Activated CD4-positive, alpha-beta T cell treated with anti-CD3 and anti-CD28 coated beads, Interleukin-2, amount 10 ng/mL, durations not matched to agents 24 days and 14 days (primary cell): ENCODE measurements at regions of chr17 and their contacts with region 1.

Region 1: DNA sequence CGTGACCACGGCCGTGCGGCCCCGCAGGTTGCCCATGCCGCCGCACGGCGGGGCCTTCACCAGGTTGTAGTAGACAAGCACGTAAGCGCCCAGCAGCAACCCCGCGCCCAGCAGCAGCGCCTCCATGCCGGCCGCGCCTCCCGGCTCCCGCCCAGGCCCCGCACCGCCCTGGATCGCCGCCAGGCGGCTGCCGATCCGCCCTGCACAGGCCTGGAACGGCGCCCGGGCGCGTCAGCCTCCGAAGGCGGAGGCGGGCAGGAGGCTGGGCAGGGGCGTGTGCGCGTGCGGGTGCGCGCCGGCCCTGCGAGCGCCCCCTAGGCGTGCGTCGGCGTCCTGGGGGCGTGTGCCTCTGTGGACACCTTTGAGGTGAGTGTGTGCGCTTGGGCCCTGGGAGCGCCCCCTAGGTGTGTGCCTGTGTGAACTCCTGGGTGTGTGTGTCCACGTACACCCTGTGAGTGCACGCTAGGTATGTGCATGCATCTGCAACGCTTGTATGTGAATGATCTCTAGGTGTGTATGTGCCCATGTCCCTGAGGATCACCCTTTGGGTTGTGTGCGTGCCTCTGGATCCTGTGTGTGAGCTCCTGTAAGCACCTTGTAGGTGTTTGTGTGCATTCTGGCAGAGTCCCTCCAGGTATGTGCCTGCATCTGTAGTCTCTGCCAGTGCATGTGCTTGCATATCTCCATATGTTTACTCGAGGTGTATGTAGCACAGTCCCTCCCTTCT is at the start of gene DHRS13:
- DNase-seq: peak; percentile 99
- H3K4me3 Mint-ChIP-seq: peak within 1 kb of the TSS; percentile 90
- H3K27ac Mint-ChIP-seq: peak within 1 kb of the TSS; percentile 86
- H3K4me1 Mint-ChIP-seq: peaks cover 39% of the 10 kb centered on the region
- H3K27me3 Mint-ChIP-seq: no peaks in the 10 kb centered on the region
- total RNA-seq, gene DHRS13: 32.4 and 34.3 TPM in 2 replicates

Region 2: DNA sequence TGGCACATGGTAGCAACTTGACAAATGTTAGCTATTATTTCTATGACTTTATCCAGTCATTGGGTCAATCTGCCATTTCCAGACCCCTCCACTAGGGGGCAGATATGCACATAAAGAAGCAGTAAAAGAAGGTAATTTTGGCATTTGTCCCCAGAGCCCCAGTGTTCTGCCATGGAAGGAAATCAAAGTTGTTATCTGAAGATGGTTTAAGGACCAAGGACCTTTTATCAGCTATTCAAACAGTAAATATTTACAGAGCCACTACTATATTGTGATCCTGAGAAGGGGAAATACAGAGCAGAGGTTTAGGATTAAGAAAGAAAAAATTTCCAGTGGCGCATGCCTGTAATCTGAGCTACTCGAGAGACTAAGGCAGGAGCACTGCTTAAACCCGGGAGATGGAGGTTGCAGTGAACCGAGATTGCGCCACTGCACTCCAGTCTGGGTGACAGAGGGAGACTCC is 139.1 kb before region 1 on chr17:
- intact Hi-C with region 1: loop called (anchors 2 kb)
- DNase-seq: peak; percentile 93
- H3K4me3 Mint-ChIP-seq: no peak overlapping the region
- H3K27ac Mint-ChIP-seq: no peak overlapping the region
- H3K4me1 Mint-ChIP-seq: peaks cover 15% of the 10 kb centered on the region
- H3K27me3 Mint-ChIP-seq: no peaks in the 10 kb centered on the region

Region 3: GRCh38 chr17:28854457-28855350 is 48.3 kb before region 1 on chr17 and contains the start of gene ERAL1:
- intact Hi-C with region 1: loop called (anchors 2 kb)
- DNase-seq: peak; percentile 96
- H3K4me3 Mint-ChIP-seq: peak within 1 kb of the TSS; percentile 82
- H3K27ac Mint-ChIP-seq: peak within 1 kb of the TSS; percentile 85
- H3K4me1 Mint-ChIP-seq: peaks cover 19% of the 10 kb centered on the region
- H3K27me3 Mint-ChIP-seq: no peaks in the 10 kb centered on the region
- total RNA-seq, gene ERAL1: 56.8 and 61.2 TPM in 2 replicates

Region 4: DNA sequence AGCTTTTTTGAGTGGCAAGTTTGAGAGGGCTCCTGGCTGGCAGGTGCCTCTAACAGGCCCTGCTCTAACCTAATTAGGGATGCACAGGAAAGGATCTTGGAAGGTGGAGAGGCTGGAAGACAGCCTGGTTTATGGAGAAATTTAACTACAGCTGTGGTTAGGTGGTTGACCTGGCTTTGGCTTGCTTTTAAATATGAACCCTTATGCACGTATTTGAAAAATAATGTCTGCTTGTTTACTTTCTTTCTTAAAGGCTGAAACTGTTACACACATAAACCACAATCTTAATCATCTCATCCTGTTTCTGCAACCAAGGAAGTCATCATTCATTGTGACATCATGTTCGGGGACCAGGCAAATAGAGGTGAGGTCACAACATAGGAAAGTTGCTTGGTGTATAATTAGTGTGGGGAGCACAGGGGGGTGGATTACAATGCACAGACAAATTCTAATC is 23.0 kb after region 1 on chr17:
- intact Hi-C with region 1: loop called (anchors 2 kb)
- DNase-seq: peak; percentile 89
- H3K4me3 Mint-ChIP-seq: peak overlapping the region; percentile 54
- H3K27ac Mint-ChIP-seq: peak overlapping the region; percentile 93
- H3K4me1 Mint-ChIP-seq: peaks cover 52% of the 10 kb centered on the region
- H3K27me3 Mint-ChIP-seq: no peaks in the 10 kb centered on the region